ENCODE measurements at regions of chr10 and their contacts with region 1.

Region 1: GRCh38 chr10:105063796-105064195 is 422.7 kb downstream of the SORCS3 start:
- DNase-seq: peak; percentile 31
- H3K4me3 ChIP-seq: no peak overlapping the region
- H3K27ac ChIP-seq: no peak overlapping the region
- H3K4me1 ChIP-seq: no peaks in the 10 kb centered on the region
- H3K27me3 ChIP-seq: no peaks in the 10 kb centered on the region
- CTCF ChIP-seq: peak; percentile 26 to 59 (median 56)
- EP300 ChIP-seq: no peak
- POLR2A ChIP-seq: no peak

Region 2: DNA sequence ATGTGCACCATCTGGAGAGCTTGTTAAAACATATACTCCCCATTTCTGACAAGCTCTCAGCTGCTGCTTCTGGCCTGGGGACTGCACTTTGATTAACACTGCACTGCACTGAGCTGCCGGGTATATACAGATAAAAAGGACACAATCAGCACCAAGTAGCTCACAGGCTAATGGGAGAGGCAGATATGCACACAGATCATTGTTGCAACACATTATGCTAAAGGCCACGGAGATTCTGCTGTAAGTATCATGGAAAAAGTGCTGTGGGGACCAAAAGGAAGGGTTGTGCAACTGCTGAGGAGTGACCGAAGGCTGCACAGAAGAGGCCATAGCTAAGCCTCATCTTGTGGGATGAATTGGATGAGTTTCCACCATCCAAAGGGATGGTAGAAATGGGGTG is 32.5 kb after region 1 on chr10:
- in situ Hi-C with region 1: no loop called
- intact Hi-C with region 1: no loop called
- DNase-seq: no peak
- H3K4me3 ChIP-seq: no peak overlapping the region
- H3K27ac ChIP-seq: no peak overlapping the region
- H3K4me1 ChIP-seq: no peaks in the 10 kb centered on the region
- H3K27me3 ChIP-seq: no peaks in the 10 kb centered on the region
- CTCF ChIP-seq: no peak
- EP300 ChIP-seq: no peak
- POLR2A ChIP-seq: no peak

Region 3: GRCh38 chr10:105161767-105162166 is 98.0 kb after region 1 on chr10:
- in situ Hi-C with region 1: no loop called
- intact Hi-C with region 1: no loop called
- DNase-seq: no peak
- H3K4me3 ChIP-seq: no peak overlapping the region
- H3K27ac ChIP-seq: no peak overlapping the region
- H3K4me1 ChIP-seq: no peaks in the 10 kb centered on the region
- H3K27me3 ChIP-seq: no peaks in the 10 kb centered on the region
- CTCF ChIP-seq: no peak
- EP300 ChIP-seq: no peak
- POLR2A ChIP-seq: no peak

Region 4: GRCh38 chr10:105691811-105692210 is 628.0 kb after region 1 on chr10:
- in situ Hi-C with region 1: loop called in 3 of 4 experiments (anchors 25 kb)
- intact Hi-C with region 1: no loop called
- DNase-seq: no peak
- H3K4me3 ChIP-seq: no peak overlapping the region
- H3K27ac ChIP-seq: no peak overlapping the region
- H3K4me1 ChIP-seq: peaks cover 0 to 4% (median 2%) of the 10 kb centered on the region in 4 donors
- H3K27me3 ChIP-seq: no peaks in the 10 kb centered on the region
- CTCF ChIP-seq: peak in 4 of 5 experiments; percentile 38 to 51 (median 49)
- EP300 ChIP-seq: no peak
- POLR2A ChIP-seq: no peak